Activated naive CD4-positive, alpha-beta T cell treated with anti-CD3 and anti-CD28 coated beads for 36 hours (primary cell): ENCODE measurements at regions of chr10 and their contacts with region 1.

Region 1: DNA sequence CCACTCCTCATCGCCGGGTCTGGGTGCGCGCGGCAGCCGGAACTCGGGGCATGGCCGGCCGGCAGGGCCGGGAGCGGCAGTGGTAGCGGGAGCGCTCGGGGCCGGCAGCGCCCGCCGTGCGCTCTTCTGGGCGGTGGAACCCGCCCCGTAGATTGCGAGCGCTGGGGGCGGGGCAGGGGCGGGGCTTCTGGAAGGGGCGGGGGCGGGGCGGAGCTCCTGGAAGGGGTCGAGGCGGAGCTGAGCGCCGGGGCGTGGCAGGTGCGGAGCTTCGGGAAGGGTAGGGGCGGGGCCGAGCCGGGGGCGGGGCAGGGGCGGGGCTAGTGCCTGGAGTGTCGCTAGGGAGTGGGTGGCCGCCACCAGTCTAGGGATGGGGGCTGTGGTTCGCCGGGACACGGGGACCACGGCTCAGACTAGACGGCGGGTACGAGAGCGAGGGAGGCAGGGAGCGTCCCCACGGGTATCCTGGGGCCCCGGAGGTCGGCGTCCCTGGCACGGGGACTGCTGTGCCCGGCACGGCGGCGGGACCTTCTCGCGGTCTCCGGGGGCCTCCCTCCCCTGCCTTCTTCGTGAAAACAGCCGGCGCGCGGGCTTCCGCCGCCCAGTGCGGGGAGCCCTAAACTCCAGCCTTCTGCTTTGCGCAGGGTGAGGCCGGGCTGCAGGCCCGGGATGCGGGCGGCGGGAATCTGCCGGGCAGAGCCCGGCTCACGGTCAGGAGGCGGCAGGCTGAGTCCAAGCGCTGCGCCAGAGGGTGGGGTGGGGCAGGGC is at the start of gene STK32C:
- DNase-seq: peak; percentile 90
- H3K4me3 Mint-ChIP-seq: peak within 1 kb of the TSS; percentile 85
- H3K27ac Mint-ChIP-seq: no peak within 1 kb of the TSS
- H3K4me1 Mint-ChIP-seq: peaks cover 9% of the 10 kb centered on the region
- H3K27me3 Mint-ChIP-seq: peaks cover 2% of the 10 kb centered on the region
- total RNA-seq, gene STK32C: 16.5 to 16.6 TPM

Region 2: DNA sequence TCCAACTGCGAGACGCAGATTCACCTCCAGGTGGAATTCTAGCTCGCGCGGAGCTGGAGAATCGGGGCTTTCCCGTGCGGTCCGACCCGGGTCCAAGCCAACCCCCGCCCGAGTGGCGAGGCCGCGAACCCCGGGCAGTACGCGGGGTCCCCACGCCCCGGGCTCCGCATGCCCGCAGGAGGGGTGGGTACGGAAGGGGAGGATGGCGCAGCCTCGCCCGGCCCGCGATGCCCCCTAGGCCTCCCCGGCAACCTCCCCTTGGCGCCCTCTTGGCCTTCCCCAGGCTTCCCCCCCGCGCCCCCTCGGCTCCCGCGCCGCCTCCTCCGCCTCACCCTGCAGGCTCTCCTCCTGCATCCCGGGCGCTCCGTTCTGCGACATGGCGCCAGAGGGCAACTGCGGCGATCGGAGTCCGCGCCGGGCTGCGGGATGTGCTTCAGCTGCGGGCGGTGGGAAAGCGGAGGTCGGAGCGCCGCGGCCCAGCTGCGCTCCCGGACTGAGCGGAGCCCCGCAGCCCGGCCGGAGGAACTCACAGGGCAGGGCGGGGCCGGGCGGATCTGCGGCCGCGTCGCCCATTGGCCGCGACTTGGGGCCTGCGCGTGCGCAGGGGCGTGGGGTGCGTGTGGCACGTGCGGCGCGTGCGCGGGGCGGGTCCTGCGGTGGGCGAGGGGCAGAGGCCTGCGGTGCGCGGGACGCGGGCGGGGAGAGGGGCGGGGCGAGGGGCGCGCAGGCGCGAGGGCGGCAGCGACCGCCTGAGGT is 326.4 kb before region 1 on chr10 and contains the start of gene BNIP3:
- CTCF ChIA-PET with region 1: no interaction called
- intact Hi-C with region 1: loop called (anchors 5 kb)
- DNase-seq: peak; percentile 94
- H3K4me3 Mint-ChIP-seq: peak within 1 kb of the TSS; percentile 83
- H3K27ac Mint-ChIP-seq: peak within 1 kb of the TSS; percentile 65
- H3K4me1 Mint-ChIP-seq: peaks cover 35% of the 10 kb centered on the region
- H3K27me3 Mint-ChIP-seq: no peaks in the 10 kb centered on the region
- total RNA-seq, gene BNIP3: 55.5 to 55.9 TPM

Region 3: DNA sequence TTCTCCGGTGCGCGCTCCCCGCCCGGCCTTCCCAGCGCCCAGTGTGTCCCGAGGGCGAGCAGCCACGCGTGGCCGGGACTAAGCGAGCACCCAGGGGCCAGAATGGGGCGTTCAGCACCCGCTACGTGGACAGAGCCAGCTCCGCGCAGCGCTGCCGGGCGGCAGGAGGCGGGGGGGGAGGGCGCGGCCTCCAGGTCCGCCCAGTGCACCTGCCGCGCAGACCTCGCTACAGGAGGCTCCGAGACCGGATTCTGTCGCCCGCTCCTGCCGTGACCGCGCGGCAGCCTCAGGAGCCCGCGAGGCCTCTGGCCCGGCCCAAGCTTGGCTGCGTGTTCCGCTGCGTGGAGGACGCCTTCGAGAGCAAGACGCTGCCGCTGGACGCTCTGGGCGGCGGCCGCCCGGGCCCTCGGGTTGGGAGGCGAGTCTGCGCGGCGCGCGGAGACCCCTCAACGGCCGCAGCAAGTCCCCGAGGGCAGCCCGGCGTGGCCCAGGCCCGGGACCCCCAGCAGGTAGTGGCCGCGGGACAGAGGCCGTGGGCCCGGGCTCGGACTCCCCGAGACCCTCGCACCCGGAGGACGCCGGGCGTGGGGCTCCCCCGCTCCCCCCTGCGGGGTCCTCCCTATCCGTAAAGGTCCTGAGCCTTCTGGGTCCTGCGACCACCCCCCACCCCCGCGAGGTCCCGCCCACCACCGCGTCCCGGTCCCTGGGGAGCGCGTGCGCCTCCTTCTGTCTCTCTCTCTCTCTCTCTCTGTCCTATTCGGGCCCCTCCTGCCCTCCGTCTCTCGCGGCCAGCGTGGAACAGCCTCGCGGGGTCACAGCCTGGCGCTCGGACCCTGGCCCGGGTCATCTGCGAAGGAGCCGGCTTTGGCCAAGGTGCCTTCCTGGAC is 122.2 kb before region 1 on chr10:
- CTCF ChIA-PET with region 1: no interaction called
- intact Hi-C with region 1: loop called (anchors 2 kb)
- DNase-seq: peak; percentile 63
- H3K4me3 Mint-ChIP-seq: peak overlapping the region; percentile 4
- H3K27ac Mint-ChIP-seq: no peak overlapping the region
- H3K4me1 Mint-ChIP-seq: peaks cover 11% of the 10 kb centered on the region
- H3K27me3 Mint-ChIP-seq: peaks cover 23% of the 10 kb centered on the region

Region 4: GRCh38 chr10:132331526-132332432 is 23.8 kb after region 1 on chr10 and contains the start of gene LRRC27:
- CTCF ChIA-PET with region 1: no interaction called
- intact Hi-C with region 1: loop called (anchors 1 kb)
- DNase-seq: peak; percentile 98
- H3K4me3 Mint-ChIP-seq: peak within 1 kb of the TSS; percentile 92
- H3K27ac Mint-ChIP-seq: peak within 1 kb of the TSS; percentile 87
- H3K4me1 Mint-ChIP-seq: peaks cover 63% of the 10 kb centered on the region
- H3K27me3 Mint-ChIP-seq: no peaks in the 10 kb centered on the region
- total RNA-seq, gene LRRC27: 1.5 to 1.9 TPM

Region 5: GRCh38 chr10:132452631-132453469 is 144.8 kb after region 1 on chr10:
- CTCF ChIA-PET with region 1: no interaction called
- intact Hi-C with region 1: loop called (anchors 1 kb)
- DNase-seq: peak; percentile 90
- H3K4me3 Mint-ChIP-seq: peak overlapping the region; percentile 6
- H3K27ac Mint-ChIP-seq: peak overlapping the region; percentile 24
- H3K4me1 Mint-ChIP-seq: peaks cover 19% of the 10 kb centered on the region
- H3K27me3 Mint-ChIP-seq: no peaks in the 10 kb centered on the region